CD8-positive, alpha-beta T cell (primary cell): ENCODE measurements at regions of chr12 and their contacts with region 1.

Region 1: GRCh38 chr12:12442548-12443071 is 85.7 kb downstream of the BORCS5 start:
- DNase-seq: peak in 2 of 9 experiments; percentile 33 to 62
- ATAC-seq: peak; percentile 0
- H3K4me3 ChIP-seq: no peak overlapping the region
- H3K4me3 Mint-ChIP-seq: peak overlapping the region; percentile 51
- H3K27ac ChIP-seq: peak overlapping the region; percentile 66 to 89
- H3K27ac Mint-ChIP-seq: peak overlapping the region; percentile 92
- H3K4me1 ChIP-seq: peaks cover 44% of the 10 kb centered on the region
- H3K4me1 Mint-ChIP-seq: peaks cover 72% of the 10 kb centered on the region
- H3K27me3 ChIP-seq: no peaks in the 10 kb centered on the region
- H3K27me3 Mint-ChIP-seq: no peaks in the 10 kb centered on the region
- CTCF ChIP-seq: no peak

Region 2: GRCh38 chr12:12214635-12215131 is 227.9 kb before region 1 on chr12:
- CTCF ChIA-PET with region 1: no interaction called
- POLR2A ChIA-PET with region 1: no interaction called
- intact Hi-C with region 1: no loop called
- DNase-seq: no peak
- ATAC-seq: no peak
- H3K4me3 ChIP-seq: no peak overlapping the region
- H3K4me3 Mint-ChIP-seq: no peak overlapping the region
- H3K27ac ChIP-seq: no peak overlapping the region
- H3K27ac Mint-ChIP-seq: no peak overlapping the region
- H3K4me1 ChIP-seq: no peaks in the 10 kb centered on the region
- H3K4me1 Mint-ChIP-seq: peaks cover 22% of the 10 kb centered on the region
- H3K27me3 ChIP-seq: peaks cover 0 to 3% of the 10 kb centered on the region in 2 experiments
- H3K27me3 Mint-ChIP-seq: peaks cover 13% of the 10 kb centered on the region
- CTCF ChIP-seq: no peak

Region 3: DNA sequence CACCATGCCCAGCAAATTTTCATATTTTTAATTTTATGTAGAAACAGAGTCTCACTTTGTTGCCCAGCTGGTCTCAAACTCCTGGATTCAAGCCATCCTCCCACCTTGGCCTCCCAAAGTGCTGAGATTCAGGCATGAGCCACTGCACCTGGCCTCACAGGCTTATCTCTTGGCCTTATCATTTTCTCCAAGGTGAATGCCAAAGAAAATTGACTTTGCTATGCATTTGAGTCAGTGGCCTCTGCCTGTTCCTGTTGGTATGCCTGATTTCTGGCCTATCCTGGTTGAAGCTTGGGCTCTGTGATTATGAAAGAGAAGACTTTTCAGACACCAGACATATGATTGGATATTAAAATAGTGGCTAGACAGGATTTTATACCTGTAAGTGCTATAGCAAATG is 126.8 kb before region 1 on chr12:
- CTCF ChIA-PET with region 1: no interaction called
- POLR2A ChIA-PET with region 1: no interaction called
- intact Hi-C with region 1: no loop called
- DNase-seq: no peak
- ATAC-seq: no peak
- H3K4me3 ChIP-seq: no peak overlapping the region
- H3K4me3 Mint-ChIP-seq: no peak overlapping the region
- H3K27ac ChIP-seq: no peak overlapping the region
- H3K27ac Mint-ChIP-seq: no peak overlapping the region
- H3K4me1 ChIP-seq: no peaks in the 10 kb centered on the region
- H3K4me1 Mint-ChIP-seq: no peaks in the 10 kb centered on the region
- H3K27me3 ChIP-seq: no peaks in the 10 kb centered on the region
- H3K27me3 Mint-ChIP-seq: peaks cover 3% of the 10 kb centered on the region
- CTCF ChIP-seq: no peak

Region 4: DNA sequence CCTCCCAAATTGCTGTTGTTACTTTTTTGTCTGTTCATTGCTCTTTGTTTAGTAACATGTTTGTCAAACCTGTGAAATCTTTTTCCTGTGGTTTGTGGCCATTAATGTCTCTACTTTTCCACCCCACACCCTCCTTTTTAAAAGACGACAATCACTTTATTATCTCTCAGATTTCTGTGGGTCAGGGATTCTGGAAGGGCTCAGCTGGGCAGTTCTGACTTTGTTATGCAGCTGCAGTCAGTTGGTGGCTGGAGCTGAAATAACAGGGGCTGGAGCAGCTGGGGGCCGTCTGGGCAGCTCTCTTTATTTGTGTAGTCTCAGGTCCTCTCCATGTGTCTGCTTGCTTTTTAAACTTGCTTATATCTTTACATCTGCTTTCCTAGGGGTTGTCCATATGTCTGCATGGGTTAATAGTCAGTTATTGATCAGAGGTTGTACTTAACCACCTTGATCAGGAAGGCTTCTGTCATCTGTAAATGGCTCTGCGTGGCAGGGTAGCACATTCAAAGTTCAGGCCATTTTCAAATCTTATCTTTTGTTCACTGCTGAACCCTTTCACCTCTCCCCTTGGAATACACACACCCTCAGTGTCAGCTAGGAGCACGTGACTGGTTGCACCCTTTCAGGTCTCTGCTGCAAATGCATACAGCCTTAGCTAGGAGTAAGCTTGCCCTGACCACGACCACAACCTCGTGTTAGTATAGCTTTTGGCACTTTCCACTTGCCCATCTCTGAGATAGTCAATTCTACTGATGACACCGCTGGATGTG is 57.9 kb before region 1 on chr12:
- CTCF ChIA-PET with region 1: interaction called, 4 read pairs
- POLR2A ChIA-PET with region 1: interaction called, 16 read pairs
- intact Hi-C with region 1: loop called (anchors 1 to 2 kb)
- DNase-seq: peak in 8 of 9 experiments; percentile 6 to 78 (median 45)
- ATAC-seq: peak; percentile 43
- H3K4me3 ChIP-seq: no peak overlapping the region
- H3K4me3 Mint-ChIP-seq: peak overlapping the region; percentile 49
- H3K27ac ChIP-seq: peak overlapping the region; percentile 26 to 76
- H3K27ac Mint-ChIP-seq: peak overlapping the region; percentile 89
- H3K4me1 ChIP-seq: peaks cover 20% of the 10 kb centered on the region
- H3K4me1 Mint-ChIP-seq: peaks cover 56% of the 10 kb centered on the region
- H3K27me3 ChIP-seq: no peaks in the 10 kb centered on the region
- H3K27me3 Mint-ChIP-seq: no peaks in the 10 kb centered on the region
- CTCF ChIP-seq: no peak

Region 5: DNA sequence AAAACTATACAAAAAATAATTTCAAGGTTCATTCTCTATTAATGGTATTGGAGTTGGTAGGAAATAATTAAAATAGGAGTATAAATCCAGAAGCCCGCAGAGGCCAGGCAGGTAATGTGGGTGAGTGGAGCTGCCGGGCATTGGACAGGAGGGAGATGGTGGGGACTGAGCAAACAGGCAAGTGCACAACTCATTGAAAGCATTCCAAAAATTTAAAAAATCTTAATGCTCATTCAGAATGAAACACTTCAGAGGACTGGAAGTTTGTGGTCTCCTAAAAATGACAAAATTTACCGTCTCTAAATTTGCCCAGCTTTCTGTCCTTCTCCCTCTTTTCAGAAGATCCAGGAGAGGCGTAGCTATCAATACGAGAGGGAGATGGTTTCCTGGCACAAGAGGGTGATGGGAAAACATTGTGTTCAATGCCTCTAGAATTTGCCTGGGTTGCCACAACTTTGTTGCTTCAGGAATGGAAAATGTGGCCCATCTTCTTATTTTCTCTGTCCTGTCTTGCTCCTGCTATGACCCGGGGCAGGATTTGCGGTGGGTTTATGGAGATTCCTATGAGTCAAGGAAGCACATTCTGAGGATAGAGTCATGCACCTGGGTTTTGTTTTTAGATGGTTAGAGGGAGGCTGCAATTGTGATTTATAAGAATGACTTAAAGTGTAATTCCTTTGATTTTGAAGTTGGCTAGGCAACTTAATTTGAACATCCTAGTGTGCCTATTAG is 13.5 kb before region 1 on chr12:
- CTCF ChIA-PET with region 1: interaction called, 3 read pairs
- POLR2A ChIA-PET with region 1: interaction called, 7 read pairs
- intact Hi-C with region 1: loop called in 1 of 2 experiments (anchors 2 kb)
- DNase-seq: no peak
- ATAC-seq: no peak
- H3K4me3 ChIP-seq: no peak overlapping the region
- H3K4me3 Mint-ChIP-seq: no peak overlapping the region
- H3K27ac ChIP-seq: no peak overlapping the region
- H3K27ac Mint-ChIP-seq: no peak overlapping the region
- H3K4me1 ChIP-seq: no peaks in the 10 kb centered on the region
- H3K4me1 Mint-ChIP-seq: peaks cover 36% of the 10 kb centered on the region
- H3K27me3 ChIP-seq: no peaks in the 10 kb centered on the region
- H3K27me3 Mint-ChIP-seq: no peaks in the 10 kb centered on the region
- CTCF ChIP-seq: no peak

Region 6: GRCh38 chr12:12467688-12468261 is 25.2 kb after region 1 on chr12:
- CTCF ChIA-PET with region 1: interaction called, 3 read pairs
- POLR2A ChIA-PET with region 1: interaction called, 18 read pairs
- intact Hi-C with region 1: loop called (anchors 1 to 2 kb)
- DNase-seq: peak in 6 of 9 experiments; percentile 43 to 68 (median 56)
- ATAC-seq: peak; percentile 9
- H3K4me3 ChIP-seq: no peak overlapping the region
- H3K4me3 Mint-ChIP-seq: no peak overlapping the region
- H3K27ac ChIP-seq: peak overlapping the region in 1 of 2 experiments; percentile 61
- H3K27ac Mint-ChIP-seq: peak overlapping the region; percentile 90
- H3K4me1 ChIP-seq: peaks cover 37% of the 10 kb centered on the region
- H3K4me1 Mint-ChIP-seq: peaks cover 69% of the 10 kb centered on the region
- H3K27me3 ChIP-seq: no peaks in the 10 kb centered on the region
- H3K27me3 Mint-ChIP-seq: no peaks in the 10 kb centered on the region
- CTCF ChIP-seq: no peak

Region 7: GRCh38 chr12:12562585-12563261 is 120.1 kb after region 1 on chr12 and contains the start of gene DUSP16:
- CTCF ChIA-PET with region 1: interaction called, 3 read pairs
- POLR2A ChIA-PET with region 1: interaction called, 12 read pairs
- intact Hi-C with region 1: loop called (anchors 1 to 2 kb)
- DNase-seq: peak; percentile 50 to 95 (median 75)
- ATAC-seq: peak; percentile 65
- H3K4me3 ChIP-seq: peak within 1 kb of the TSS; percentile 77 to 80
- H3K4me3 Mint-ChIP-seq: peak within 1 kb of the TSS; percentile 95
- H3K27ac ChIP-seq: peak within 1 kb of the TSS; percentile 92 to 96
- H3K27ac Mint-ChIP-seq: peak within 1 kb of the TSS; percentile 99
- H3K4me1 ChIP-seq: peaks cover 16% of the 10 kb centered on the region
- H3K4me1 Mint-ChIP-seq: peaks cover 43% of the 10 kb centered on the region
- H3K27me3 ChIP-seq: no peaks in the 10 kb centered on the region
- H3K27me3 Mint-ChIP-seq: no peaks in the 10 kb centered on the region
- CTCF ChIP-seq: no peak
- total RNA-seq, gene DUSP16: 27.9 to 34.1 TPM